AG04450 (cell line): ENCODE measurements at regions of chr20 and their contacts with region 1.

Region 1: DNA sequence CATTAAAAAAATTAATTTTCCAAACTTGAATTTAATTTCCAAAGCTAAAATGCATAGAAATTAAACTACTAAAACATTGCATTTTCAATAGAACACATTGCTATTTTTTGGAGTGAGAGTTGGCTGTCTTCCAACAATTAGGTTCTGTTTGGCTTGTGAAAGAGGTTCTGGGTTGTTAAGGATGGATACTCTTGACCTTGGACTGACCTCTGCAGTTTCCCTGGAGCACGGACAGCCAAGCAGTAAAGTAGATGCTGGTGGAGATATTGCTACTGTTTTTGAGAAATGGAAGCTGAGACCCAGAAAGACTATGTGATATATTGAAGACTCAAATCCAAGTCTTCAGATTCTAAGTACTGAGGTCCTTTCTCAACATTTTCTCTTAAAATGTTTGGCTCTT is 95.9 kb upstream of the CHD6 start:
- DNase-seq: no peak
- H3K4me3 ChIP-seq: no peak overlapping the region
- H3K27ac ChIP-seq: no peak overlapping the region
- H3K27me3 ChIP-seq: no peaks in the 10 kb centered on the region
- CTCF ChIP-seq: no peak

Region 2: GRCh38 chr20:41627611-41628244 is 86.3 kb before region 1 on chr20:
- CTCF ChIA-PET with region 1: no interaction called
- POLR2A ChIA-PET with region 1: no interaction called
- DNase-seq: no peak
- H3K4me3 ChIP-seq: no peak overlapping the region
- H3K27ac ChIP-seq: no peak overlapping the region
- H3K27me3 ChIP-seq: peaks cover 2% of the 10 kb centered on the region
- CTCF ChIP-seq: no peak

Region 3: GRCh38 chr20:41697861-41698419 is 16.1 kb before region 1 on chr20:
- CTCF ChIA-PET with region 1: interaction called, 14 read pairs
- POLR2A ChIA-PET with region 1: no interaction called
- DNase-seq: no peak
- H3K4me3 ChIP-seq: no peak overlapping the region
- H3K27ac ChIP-seq: no peak overlapping the region
- H3K27me3 ChIP-seq: peaks cover 3% of the 10 kb centered on the region
- CTCF ChIP-seq: peak; percentile 91